ENCODE measurements at regions of chr4 and their contacts with region 1.

Region 1: DNA sequence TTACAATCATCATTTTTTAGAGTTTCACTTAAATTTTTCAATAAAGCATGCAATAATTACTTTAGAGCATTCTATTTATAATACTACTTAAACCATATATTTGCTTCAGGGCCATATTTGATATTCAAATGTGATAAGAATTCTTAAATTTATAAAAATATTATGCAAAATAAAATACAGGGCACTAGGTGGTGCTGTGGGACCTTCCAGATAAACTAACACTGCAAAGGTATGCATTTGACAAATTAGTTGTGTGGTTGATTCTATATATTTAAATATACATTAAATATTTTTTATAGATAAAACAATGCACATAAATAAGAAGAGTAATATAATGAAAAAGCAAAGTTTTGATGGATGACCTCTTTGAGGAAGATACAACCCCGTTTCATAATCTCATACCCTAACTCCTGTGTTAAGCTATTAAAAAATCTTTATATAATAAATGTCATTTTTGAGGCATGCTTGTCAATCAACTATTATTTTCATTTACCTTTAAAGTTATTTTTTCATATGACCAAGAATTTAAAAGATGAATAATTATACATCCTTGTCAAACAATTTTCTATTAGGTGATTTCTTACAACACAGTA is 128.4 kb downstream of the REELD1 start:
- DNase-seq: peak; percentile 11 to 43
- H3K4me3 ChIP-seq: no peak overlapping the region
- H3K27ac ChIP-seq: no peak overlapping the region
- H3K4me1 ChIP-seq: peaks cover 19% of the 10 kb centered on the region
- H3K27me3 ChIP-seq: no peaks in the 10 kb centered on the region
- CTCF ChIP-seq: peak; percentile 70

Region 2: DNA sequence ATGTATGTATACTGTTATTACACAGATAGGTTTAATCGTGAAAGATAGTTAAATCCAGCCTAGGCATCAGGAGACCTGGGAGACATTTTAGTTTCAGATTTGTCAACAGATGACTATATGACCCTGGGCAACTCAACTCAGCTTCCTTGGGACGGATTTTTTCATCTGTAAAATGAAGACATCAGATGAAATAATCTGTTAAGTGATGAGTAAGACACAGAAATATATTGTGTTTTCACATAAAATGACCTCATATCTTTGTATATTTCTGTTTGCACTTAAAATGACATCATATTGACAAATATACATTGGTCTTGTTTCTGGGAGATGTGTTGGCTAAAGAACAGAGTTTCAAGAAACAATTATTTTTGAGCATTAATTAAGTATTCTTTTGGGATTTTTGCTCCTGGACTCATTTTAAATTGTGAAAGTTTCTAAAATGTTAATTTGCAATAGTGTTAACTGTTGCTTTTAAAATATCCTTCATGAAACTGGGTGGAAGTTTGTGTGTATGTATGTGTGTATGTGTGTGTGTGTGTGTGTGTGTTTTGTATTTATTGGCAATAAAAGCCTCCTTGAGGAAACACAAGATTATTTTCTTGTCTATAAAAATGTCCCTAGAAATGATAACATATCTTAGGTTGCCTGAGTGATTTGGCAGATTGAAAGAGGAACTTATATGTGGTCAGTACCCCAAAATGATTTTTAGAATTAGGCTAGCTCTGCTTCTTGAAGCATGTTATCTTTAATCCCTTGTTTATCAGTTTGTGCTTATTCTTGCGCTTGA is 752.6 kb before region 1 on chr4:
- CTCF ChIA-PET with region 1: no interaction called
- POLR2A ChIA-PET with region 1: no interaction called
- intact Hi-C with region 1: no loop called
- DNase-seq: no peak
- H3K4me3 ChIP-seq: no peak overlapping the region
- H3K27ac ChIP-seq: no peak overlapping the region
- H3K4me1 ChIP-seq: no peaks in the 10 kb centered on the region
- H3K27me3 ChIP-seq: no peaks in the 10 kb centered on the region
- CTCF ChIP-seq: no peak

Region 3: GRCh38 chr4:146095091-146095690 is 247.5 kb before region 1 on chr4:
- CTCF ChIA-PET with region 1: no interaction called
- POLR2A ChIA-PET with region 1: no interaction called
- intact Hi-C with region 1: loop called (anchors 5 kb)
- DNase-seq: peak; percentile 20 to 41
- H3K4me3 ChIP-seq: no peak overlapping the region
- H3K27ac ChIP-seq: no peak overlapping the region
- H3K4me1 ChIP-seq: no peaks in the 10 kb centered on the region
- H3K27me3 ChIP-seq: no peaks in the 10 kb centered on the region
- CTCF ChIP-seq: peak; percentile 78

Region 4: GRCh38 chr4:146243141-146243882 is 99.4 kb before region 1 on chr4:
- CTCF ChIA-PET with region 1: no interaction called
- POLR2A ChIA-PET with region 1: no interaction called
- intact Hi-C with region 1: loop called (anchors 1 kb)
- DNase-seq: no peak
- H3K4me3 ChIP-seq: no peak overlapping the region
- H3K27ac ChIP-seq: no peak overlapping the region
- H3K4me1 ChIP-seq: peaks cover 33% of the 10 kb centered on the region
- H3K27me3 ChIP-seq: no peaks in the 10 kb centered on the region
- CTCF ChIP-seq: peak; percentile 32; the same call in 1 of the 2 replicates

Region 5: DNA sequence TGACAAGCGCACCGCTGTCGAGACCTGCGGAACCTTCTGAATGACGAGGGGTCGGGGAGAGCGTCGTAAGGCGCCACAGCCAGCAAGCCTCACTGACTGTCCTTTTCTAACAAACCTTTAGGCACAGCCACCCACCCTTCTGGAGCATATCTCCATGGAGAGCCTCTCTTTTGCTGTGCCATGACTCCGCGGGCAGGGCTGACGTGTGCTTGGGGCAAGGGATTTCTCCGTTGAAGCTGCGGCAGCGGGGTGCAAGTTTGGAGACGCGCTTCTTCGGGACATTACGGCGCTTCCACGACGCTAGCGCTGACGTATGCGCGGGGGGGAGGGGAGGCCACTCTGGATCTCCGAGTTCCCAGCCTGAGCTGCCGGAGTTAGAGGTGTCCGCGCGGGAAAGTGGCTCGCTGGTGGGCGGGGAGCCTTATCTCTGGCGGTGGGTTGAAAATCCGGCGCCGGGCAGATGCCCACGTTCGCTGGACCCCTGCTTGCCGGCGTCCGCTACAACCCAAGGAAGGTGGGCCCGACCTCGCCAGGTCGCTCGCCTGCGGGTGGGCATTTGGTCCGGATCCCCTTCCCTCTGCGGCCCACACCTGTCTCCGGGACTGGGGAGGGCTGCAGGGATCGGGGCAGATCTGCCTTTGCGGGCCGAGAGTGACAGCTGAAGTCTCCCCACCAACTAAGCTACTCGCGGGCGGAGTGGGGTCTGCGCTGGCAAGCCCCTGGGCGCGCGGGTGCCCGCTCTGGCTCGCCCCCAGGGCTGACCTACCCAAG is 179.6 kb after region 1 on chr4:
- CTCF ChIA-PET with region 1: no interaction called
- POLR2A ChIA-PET with region 1: no interaction called
- intact Hi-C with region 1: loop called (anchors 2 kb)
- DNase-seq: peak; percentile 51 to 71
- H3K4me3 ChIP-seq: peak overlapping the region; percentile 95
- H3K27ac ChIP-seq: peak overlapping the region; percentile 83
- H3K4me1 ChIP-seq: peaks cover 15% of the 10 kb centered on the region
- H3K27me3 ChIP-seq: no peaks in the 10 kb centered on the region
- CTCF ChIP-seq: no peak

Region 6: GRCh38 chr4:146916479-146917076 is 573.9 kb after region 1 on chr4:
- CTCF ChIA-PET with region 1: interaction called, 4 read pairs
- POLR2A ChIA-PET with region 1: no interaction called
- intact Hi-C with region 1: loop called (anchors 1 kb)
- DNase-seq: peak in 1 of 2 experiments; percentile 7
- H3K4me3 ChIP-seq: no peak overlapping the region
- H3K27ac ChIP-seq: no peak overlapping the region
- H3K4me1 ChIP-seq: no peaks in the 10 kb centered on the region
- H3K27me3 ChIP-seq: no peaks in the 10 kb centered on the region
- CTCF ChIP-seq: peak; percentile 81

Region 7: GRCh38 chr4:147019061-147019460 is 676.4 kb after region 1 on chr4:
- CTCF ChIA-PET with region 1: no interaction called
- POLR2A ChIA-PET with region 1: no interaction called
- intact Hi-C with region 1: loop called (anchors 2 kb)
- DNase-seq: peak in 1 of 2 experiments; percentile 63
- H3K4me3 ChIP-seq: no peak overlapping the region
- H3K27ac ChIP-seq: no peak overlapping the region
- H3K4me1 ChIP-seq: no peaks in the 10 kb centered on the region
- H3K27me3 ChIP-seq: no peaks in the 10 kb centered on the region
- CTCF ChIP-seq: peak; percentile 76

Region 8: GRCh38 chr4:147096667-147097604 is 754.2 kb after region 1 on chr4:
- CTCF ChIA-PET with region 1: interaction called, 6 read pairs
- POLR2A ChIA-PET with region 1: no interaction called
- intact Hi-C with region 1: loop called (anchors 2 kb)
- DNase-seq: peak in 1 of 2 experiments; percentile 36
- H3K4me3 ChIP-seq: no peak overlapping the region
- H3K27ac ChIP-seq: no peak overlapping the region
- H3K4me1 ChIP-seq: no peaks in the 10 kb centered on the region
- H3K27me3 ChIP-seq: no peaks in the 10 kb centered on the region
- CTCF ChIP-seq: peak; percentile 78

Measured in PC-9 (cell line).